ENCODE measurements at regions of chr12 and their contacts with region 1.

Region 1: DNA sequence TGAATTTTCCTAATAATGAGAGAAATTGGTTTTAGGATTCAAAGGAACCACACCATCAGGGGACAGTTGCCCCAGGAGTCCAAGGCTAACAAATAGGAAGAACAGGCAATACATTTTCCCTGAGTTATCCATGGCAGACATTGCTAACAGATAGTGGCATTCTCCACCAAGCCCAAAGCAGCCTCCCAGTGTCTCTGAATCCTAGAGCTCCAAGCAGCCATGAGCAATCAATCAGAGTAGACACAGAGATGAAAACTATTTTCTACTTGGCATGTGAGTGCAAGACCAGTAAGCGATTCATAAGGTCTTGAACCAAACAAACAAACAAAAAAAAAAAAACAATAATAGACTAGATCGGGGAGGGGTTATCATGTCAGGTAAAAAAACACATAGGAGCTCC is 515.7 kb downstream of the MED13L start:
- DNase-seq: no peak
- H3K4me3 ChIP-seq: no peak overlapping the region
- H3K27ac ChIP-seq: peak overlapping the region; percentile 94
- H3K4me1 ChIP-seq: peaks cover 28% of the 10 kb centered on the region
- H3K27me3 ChIP-seq: no peaks in the 10 kb centered on the region
- CTCF ChIP-seq: no peak
- POLR2A ChIP-seq: no peak

Region 2: DNA sequence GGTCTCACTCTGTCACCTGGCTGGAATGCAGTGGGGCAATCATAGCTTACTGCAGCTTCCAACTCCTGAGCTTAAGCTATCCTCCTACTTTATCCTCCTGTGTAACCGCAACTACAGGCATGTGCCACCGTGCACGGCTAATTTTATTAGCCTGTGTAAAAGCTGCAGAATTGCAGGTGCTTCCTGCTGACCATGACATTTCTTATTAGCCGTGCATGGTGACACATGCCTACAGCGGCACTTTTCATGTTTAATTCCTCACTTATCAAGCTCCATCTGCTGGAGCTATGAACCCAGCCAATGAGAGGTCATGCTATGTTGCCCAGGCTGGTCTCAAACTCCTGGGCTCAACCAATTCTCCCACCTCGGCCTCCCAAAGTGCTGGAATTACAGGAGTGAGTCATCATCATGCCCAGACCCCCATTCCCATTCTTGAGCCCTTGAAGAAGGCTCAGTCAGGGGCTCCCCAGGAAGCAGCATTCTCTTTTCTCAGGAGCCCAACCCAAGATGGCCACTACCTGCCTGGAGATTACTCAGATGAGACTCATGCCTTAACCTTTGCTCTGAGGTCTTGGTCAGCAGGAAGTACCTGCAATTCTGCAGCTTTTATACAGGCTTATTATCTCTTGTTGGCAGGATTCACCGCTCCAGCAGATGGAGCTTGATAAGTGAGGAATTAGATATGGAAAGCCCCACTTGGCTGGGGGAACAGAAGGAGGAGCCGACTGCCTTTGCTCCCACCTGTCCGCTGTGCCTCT is 12.5 kb after region 1 on chr12:
- intact Hi-C with region 1: loop called (anchors 1 kb)
- DNase-seq: no peak
- H3K4me3 ChIP-seq: no peak overlapping the region
- H3K27ac ChIP-seq: no peak overlapping the region
- H3K4me1 ChIP-seq: no peaks in the 10 kb centered on the region
- H3K27me3 ChIP-seq: no peaks in the 10 kb centered on the region
- CTCF ChIP-seq: no peak
- POLR2A ChIP-seq: no peak

Region 3: DNA sequence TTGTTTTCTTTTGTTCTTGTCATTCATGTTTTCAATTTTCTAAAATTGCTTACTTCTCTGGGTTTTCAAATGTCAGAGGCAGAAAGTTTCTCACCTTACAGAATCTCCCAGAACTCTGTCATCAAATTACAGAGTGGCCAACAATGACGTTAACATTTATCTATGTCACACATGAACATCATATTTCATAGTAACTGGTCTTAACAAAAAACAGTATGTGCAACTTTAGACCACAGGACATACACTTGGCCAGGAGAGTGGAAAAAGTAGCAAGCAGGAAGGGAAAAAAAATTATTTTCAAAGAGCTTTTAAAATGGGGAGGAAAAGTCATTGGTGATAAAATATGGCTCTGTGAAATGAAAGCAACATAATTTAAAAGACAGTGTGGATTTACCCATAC is 89.2 kb after region 1 on chr12:
- intact Hi-C with region 1: no loop called
- DNase-seq: no peak
- H3K4me3 ChIP-seq: no peak overlapping the region
- H3K27ac ChIP-seq: no peak overlapping the region
- H3K4me1 ChIP-seq: no peaks in the 10 kb centered on the region
- H3K27me3 ChIP-seq: no peaks in the 10 kb centered on the region
- CTCF ChIP-seq: no peak
- POLR2A ChIP-seq: no peak

Region 4: DNA sequence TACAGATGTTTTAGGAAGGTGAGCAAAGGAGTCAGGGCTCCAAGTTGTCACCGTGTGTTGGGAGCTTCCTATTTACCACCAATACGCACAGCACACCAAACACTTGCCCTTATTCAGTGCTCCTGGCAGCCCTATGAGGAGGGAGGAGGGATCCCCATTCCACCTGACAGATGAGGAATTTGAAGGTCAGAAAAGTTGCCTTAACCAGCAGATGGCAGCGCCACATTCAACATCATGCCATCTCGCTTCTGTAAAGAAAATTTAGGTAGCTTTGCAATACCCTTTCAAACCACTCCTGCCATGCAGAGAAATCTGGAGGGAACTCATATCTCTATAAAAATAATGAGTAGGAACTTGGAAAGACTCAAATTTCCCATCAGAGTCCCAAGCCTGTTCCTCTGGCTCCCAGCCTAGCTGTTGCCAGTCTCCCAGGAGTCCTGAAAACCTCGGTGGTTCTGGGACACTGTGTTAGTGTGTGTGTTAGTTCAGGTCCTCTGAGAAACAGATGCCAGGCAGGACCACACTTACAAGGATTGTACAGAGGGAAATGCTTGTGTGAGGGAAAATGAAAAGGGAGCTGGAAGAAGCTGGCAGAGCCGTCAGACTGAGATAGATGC is 105.2 kb after region 1 on chr12:
- intact Hi-C with region 1: no loop called
- DNase-seq: no peak
- H3K4me3 ChIP-seq: no peak overlapping the region
- H3K27ac ChIP-seq: no peak overlapping the region
- H3K4me1 ChIP-seq: peaks cover 13% of the 10 kb centered on the region
- H3K27me3 ChIP-seq: no peaks in the 10 kb centered on the region
- CTCF ChIP-seq: no peak
- POLR2A ChIP-seq: no peak

Measured in vagina (tissue), 2 donors.